ENCODE measurements at regions of chr22 and their contacts with region 1.

Region 1: GRCh38 chr22:36065775-36066559 is 37.3 kb upstream of the RBFOX2 start:
- DNase-seq: no peak
- ATAC-seq: peak; percentile 91
- H3K4me3 ChIP-seq: peak overlapping the region; percentile 46
- H3K27ac ChIP-seq: no peak overlapping the region
- H3K4me1 ChIP-seq: no peaks in the 10 kb centered on the region; the same call in 1 of the 2 replicates
- H3K27me3 ChIP-seq: no peaks in the 10 kb centered on the region; a peak in 1 of 4 replicates
- CTCF ChIP-seq: peak; percentile 58 to 97 (median 91)
- EP300 ChIP-seq: no peak
- POLR2A ChIP-seq: no peak
- RAD21 ChIP-seq: peak; percentile 45

Region 2: DNA sequence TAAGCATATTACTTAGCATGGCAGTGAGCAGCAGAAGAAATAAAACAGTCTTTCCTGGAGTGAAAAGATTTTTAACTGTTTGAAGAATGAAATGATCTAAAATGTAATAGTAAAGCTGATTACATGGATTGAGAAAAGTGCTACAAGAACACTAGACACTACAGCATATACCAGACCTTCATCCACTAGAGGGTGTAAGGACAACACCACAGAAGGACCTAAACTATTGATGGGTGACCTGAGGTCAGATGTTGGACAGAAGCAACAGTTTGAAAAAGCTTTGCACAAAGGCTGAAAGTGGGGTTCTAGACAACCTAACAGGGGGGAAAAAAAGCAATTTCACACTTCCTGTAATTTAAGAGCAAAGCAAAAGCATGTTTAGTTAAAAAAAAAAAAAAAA is 135.0 kb before region 1 on chr22:
- CTCF ChIA-PET with region 1: interaction called, 21 read pairs
- POLR2A ChIA-PET with region 1: no interaction called
- RAD21 ChIA-PET with region 1: interaction called, 7 read pairs
- SMC1A ChIA-PET with region 1: no interaction called
- in situ Hi-C with region 1: no loop called
- intact Hi-C with region 1: loop called (anchors 1 kb)
- DNase-seq: peak; percentile 24
- ATAC-seq: peak; percentile 87
- H3K4me3 ChIP-seq: no peak overlapping the region
- H3K27ac ChIP-seq: no peak overlapping the region
- H3K4me1 ChIP-seq: no peaks in the 10 kb centered on the region
- H3K27me3 ChIP-seq: no peaks in the 10 kb centered on the region; a peak in 1 of 4 replicates
- CTCF ChIP-seq: peak; percentile 52 to 70 (median 53); a peak in 5 of 6 replicates
- EP300 ChIP-seq: no peak
- POLR2A ChIP-seq: no peak
- RAD21 ChIP-seq: peak; percentile 68

Region 3: DNA sequence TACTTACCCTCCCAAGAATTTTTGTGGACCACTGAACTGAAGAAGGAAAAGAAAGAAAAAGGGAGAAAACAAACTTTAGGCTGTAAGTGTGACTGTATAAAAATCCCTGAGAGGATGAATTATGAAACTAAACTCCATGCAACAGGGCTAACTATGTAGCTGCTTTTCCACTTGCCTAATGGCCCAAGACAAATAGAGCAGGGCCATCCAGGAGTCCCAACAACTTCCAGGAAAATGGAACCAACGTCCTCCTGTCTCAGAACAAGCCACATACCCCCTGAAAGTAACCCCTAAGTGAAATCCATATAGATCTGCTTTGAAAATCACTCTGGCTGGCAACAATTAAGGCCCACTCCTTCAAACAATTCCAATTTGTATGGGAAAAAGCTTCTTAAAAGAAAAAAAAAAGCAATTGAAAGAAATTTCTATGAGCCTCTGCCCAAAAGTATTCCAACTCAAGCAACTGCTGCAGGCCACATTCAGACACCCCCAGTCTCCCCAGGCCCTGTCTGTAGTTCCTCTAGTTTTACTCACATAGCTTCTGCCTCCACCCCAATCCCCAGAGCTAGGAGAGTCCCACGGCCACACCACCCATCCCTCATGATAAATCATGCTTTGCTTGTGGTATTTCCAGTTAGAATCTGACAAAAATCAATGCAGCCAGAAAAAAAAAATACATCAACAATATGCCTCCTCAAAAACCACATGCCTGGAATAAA is 50.0 kb before region 1 on chr22:
- CTCF ChIA-PET with region 1: interaction called, 13 read pairs
- POLR2A ChIA-PET with region 1: no interaction called
- RAD21 ChIA-PET with region 1: interaction called, 4 read pairs
- SMC1A ChIA-PET with region 1: interaction called, 5 read pairs
- in situ Hi-C with region 1: no loop called
- intact Hi-C with region 1: no loop called
- DNase-seq: no peak
- ATAC-seq: no peak
- H3K4me3 ChIP-seq: no peak overlapping the region
- H3K27ac ChIP-seq: no peak overlapping the region
- H3K4me1 ChIP-seq: peaks cover 3% of the 10 kb centered on the region; the same call in 1 of the 2 replicates
- H3K27me3 ChIP-seq: no peaks in the 10 kb centered on the region; a peak in 2 of 4 replicates
- CTCF ChIP-seq: no peak
- EP300 ChIP-seq: no peak
- POLR2A ChIP-seq: no peak
- RAD21 ChIP-seq: no peak

Region 4: DNA sequence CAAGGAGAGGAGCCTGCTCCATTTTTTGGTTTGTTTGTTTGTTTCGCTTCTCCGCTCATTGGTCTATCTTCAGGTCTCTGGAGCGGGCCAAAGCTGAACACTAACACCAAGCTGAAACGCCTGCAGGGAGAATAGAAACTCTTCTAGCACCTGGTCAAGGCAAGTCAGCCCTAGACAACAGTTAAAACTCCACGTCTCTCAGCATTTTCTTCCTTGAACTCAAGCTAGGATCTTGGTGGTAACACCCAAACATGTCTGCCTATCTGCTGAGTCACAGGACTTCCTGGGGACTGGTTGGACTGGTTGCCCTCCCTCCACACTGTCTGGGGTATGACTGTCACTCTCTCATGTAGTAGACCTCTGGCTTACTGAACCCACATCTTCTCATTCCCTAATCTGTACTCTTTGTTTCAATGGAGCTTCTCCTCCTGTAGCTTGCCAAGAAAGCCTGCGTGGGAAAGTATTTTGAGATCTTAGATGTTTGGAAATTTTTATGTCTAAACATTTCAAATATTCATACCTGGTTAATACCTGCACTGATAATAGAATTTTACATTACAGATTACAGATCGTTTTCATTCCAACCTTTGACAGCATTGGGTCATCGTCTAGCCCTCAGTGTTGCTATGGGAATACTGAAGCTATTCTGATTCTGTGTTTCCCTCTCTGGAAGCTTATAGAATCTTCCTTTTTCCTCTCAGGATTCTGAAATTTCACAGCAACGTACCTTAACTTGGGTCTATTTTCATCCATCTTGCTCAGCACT is 13.3 kb before region 1 on chr22:
- CTCF ChIA-PET with region 1: interaction called, 35 read pairs
- POLR2A ChIA-PET with region 1: no interaction called
- RAD21 ChIA-PET with region 1: interaction called, 3 read pairs
- SMC1A ChIA-PET with region 1: interaction called, 3 read pairs
- in situ Hi-C with region 1: no loop called
- intact Hi-C with region 1: no loop called
- DNase-seq: no peak
- ATAC-seq: 0 out of 3 replicates have a peak, but pooled peaks have one; percentile 31
- H3K4me3 ChIP-seq: no peak overlapping the region
- H3K27ac ChIP-seq: no peak overlapping the region
- H3K4me1 ChIP-seq: no peaks in the 10 kb centered on the region
- H3K27me3 ChIP-seq: no peaks in the 10 kb centered on the region
- CTCF ChIP-seq: no peak
- EP300 ChIP-seq: no peak
- POLR2A ChIP-seq: no peak
- RAD21 ChIP-seq: no peak

Region 5: GRCh38 chr22:36100134-36100824 is 34.3 kb after region 1 on chr22:
- CTCF ChIA-PET with region 1: interaction called, 12 read pairs
- POLR2A ChIA-PET with region 1: no interaction called
- RAD21 ChIA-PET with region 1: no interaction called
- SMC1A ChIA-PET with region 1: interaction called, 3 read pairs
- in situ Hi-C with region 1: no loop called
- intact Hi-C with region 1: no loop called
- DNase-seq: no peak
- ATAC-seq: no peak
- H3K4me3 ChIP-seq: no peak overlapping the region
- H3K27ac ChIP-seq: no peak overlapping the region
- H3K4me1 ChIP-seq: peaks cover 12% of the 10 kb centered on the region
- H3K27me3 ChIP-seq: no peaks in the 10 kb centered on the region
- CTCF ChIP-seq: no peak
- EP300 ChIP-seq: no peak
- POLR2A ChIP-seq: no peak
- RAD21 ChIP-seq: no peak

Region 6: GRCh38 chr22:36123673-36124630 is 58.0 kb after region 1 on chr22:
- CTCF ChIA-PET with region 1: interaction called, 28 read pairs
- POLR2A ChIA-PET with region 1: no interaction called
- RAD21 ChIA-PET with region 1: interaction called, 18 read pairs
- SMC1A ChIA-PET with region 1: interaction called, 15 read pairs
- in situ Hi-C with region 1: no loop called
- intact Hi-C with region 1: loop called (anchors 5 kb)
- DNase-seq: peak; percentile 52
- ATAC-seq: peak; percentile 100
- H3K4me3 ChIP-seq: peak overlapping the region; percentile 26; the same call in 1 of the 2 replicates
- H3K27ac ChIP-seq: no peak overlapping the region
- H3K4me1 ChIP-seq: no peaks in the 10 kb centered on the region
- H3K27me3 ChIP-seq: no peaks in the 10 kb centered on the region
- CTCF ChIP-seq: peak; percentile 98 to 99 (median 99); a peak in 5 of 6 replicates
- EP300 ChIP-seq: no peak
- POLR2A ChIP-seq: 0 out of 2 replicates have a peak, but pooled peaks have one; percentile 30
- RAD21 ChIP-seq: peak; percentile 96

Region 7: GRCh38 chr22:36201630-36202319 is 135.8 kb after region 1 on chr22 and contains the start of gene APOL4:
- CTCF ChIA-PET with region 1: no interaction called
- POLR2A ChIA-PET with region 1: no interaction called
- RAD21 ChIA-PET with region 1: no interaction called
- SMC1A ChIA-PET with region 1: no interaction called
- in situ Hi-C with region 1: no loop called
- intact Hi-C with region 1: no loop called
- DNase-seq: no peak
- ATAC-seq: no peak
- H3K4me3 ChIP-seq: no peak within 1 kb of the TSS
- H3K27ac ChIP-seq: no peak within 1 kb of the TSS
- H3K4me1 ChIP-seq: peaks cover 12% of the 10 kb centered on the region
- H3K27me3 ChIP-seq: no peaks in the 10 kb centered on the region
- CTCF ChIP-seq: no peak
- EP300 ChIP-seq: no peak
- POLR2A ChIP-seq: no peak
- RAD21 ChIP-seq: no peak
- polyA plus RNA-seq, gene APOL4: not detected

Region 8: GRCh38 chr22:36998620-36999340 is 932.8 kb after region 1 on chr22:
- CTCF ChIA-PET with region 1: no interaction called
- POLR2A ChIA-PET with region 1: no interaction called
- RAD21 ChIA-PET with region 1: no interaction called
- SMC1A ChIA-PET with region 1: no interaction called
- in situ Hi-C with region 1: no loop called
- intact Hi-C with region 1: no loop called
- DNase-seq: no peak
- ATAC-seq: no peak
- H3K4me3 ChIP-seq: no peak overlapping the region
- H3K27ac ChIP-seq: no peak overlapping the region
- H3K4me1 ChIP-seq: no peaks in the 10 kb centered on the region
- H3K27me3 ChIP-seq: peaks cover 0 to 3% of the 10 kb centered on the region in 2 experiments; a peak in 2 of 4 replicates
- CTCF ChIP-seq: 0 out of 6 replicates have a peak, but pooled peaks of 1 of the 3 experiments have one; percentile 3
- EP300 ChIP-seq: no peak
- POLR2A ChIP-seq: no peak
- RAD21 ChIP-seq: 0 out of 2 replicates have a peak, but pooled peaks have one; percentile 9

Measured in GM12878 (cell line).